ENCODE measurements at regions of chr3 and their contacts with region 1.

Region 1: DNA sequence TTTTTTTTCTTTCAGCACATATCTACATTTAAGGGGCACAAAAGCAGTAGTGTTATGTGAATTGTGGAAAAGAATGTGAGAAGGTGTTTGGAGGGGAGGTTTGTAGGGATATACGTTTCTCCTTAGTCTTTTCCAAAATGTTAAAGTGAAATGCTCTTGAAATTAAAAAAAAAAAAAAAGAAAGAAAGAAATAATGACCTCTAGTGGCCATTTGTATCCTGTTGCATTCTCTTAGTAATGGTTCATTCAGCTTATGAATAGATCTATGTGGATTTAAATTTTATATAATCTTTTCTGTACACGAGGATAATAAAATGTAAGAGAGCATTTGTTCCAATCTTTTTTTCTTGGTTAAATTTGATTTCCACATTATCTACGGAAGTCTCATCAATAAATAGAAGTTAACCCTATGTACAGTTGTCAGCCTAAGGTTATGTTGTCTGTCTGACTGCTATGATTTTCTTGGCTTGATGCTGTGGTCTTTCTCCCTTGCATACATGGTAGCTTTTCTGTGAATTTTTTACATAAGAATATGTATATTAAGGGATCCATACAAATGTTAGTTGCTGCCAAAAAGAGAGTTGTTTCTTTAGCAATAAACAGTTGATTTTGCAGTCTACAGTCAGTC is 1.7 kb downstream of the P2RY13 start:
- DNase-seq: no peak
- H3K4me3 ChIP-seq: no peak overlapping the region
- H3K27me3 ChIP-seq: no peaks in the 10 kb centered on the region; the same call in 1 of the 2 replicates
- CTCF ChIP-seq: peak; percentile 58; the same call in 1 of the 2 replicates

Region 2: GRCh38 chr3:151305101-151305750 is 22.5 kb before region 1 on chr3:
- CTCF ChIA-PET with region 1: interaction called, 17 read pairs
- POLR2A ChIA-PET with region 1: no interaction called
- DNase-seq: peak; percentile 92
- H3K4me3 ChIP-seq: no peak overlapping the region
- H3K27me3 ChIP-seq: no peaks in the 10 kb centered on the region; the same call in 1 of the 2 replicates
- CTCF ChIP-seq: peak; percentile 38

Region 3: DNA sequence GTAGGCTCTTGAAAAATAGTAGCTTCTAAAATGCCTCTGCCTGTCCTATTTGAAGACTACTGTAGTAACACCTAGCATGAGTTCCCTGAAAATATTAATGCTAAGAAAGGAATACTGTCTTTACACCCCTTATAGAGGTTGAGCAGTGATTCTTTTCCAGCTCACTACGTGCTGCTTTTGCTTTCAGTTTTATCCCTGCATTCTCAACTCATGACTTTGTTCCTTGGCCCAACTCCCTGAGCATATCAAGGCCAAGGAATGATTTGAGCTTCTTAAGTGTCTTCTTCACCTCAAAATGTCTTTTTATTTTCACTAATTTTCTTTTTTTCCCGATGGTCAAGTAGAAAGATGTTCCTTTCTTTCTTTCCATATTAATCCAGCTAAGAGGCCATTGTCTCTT is 18.2 kb after region 1 on chr3:
- CTCF ChIA-PET with region 1: interaction called, 16 read pairs
- POLR2A ChIA-PET with region 1: no interaction called
- DNase-seq: peak; percentile 35
- H3K4me3 ChIP-seq: no peak overlapping the region
- H3K27me3 ChIP-seq: no peaks in the 10 kb centered on the region
- CTCF ChIP-seq: no peak